ENCODE measurements at regions of chr10 and their contacts with region 1.

Region 1: DNA sequence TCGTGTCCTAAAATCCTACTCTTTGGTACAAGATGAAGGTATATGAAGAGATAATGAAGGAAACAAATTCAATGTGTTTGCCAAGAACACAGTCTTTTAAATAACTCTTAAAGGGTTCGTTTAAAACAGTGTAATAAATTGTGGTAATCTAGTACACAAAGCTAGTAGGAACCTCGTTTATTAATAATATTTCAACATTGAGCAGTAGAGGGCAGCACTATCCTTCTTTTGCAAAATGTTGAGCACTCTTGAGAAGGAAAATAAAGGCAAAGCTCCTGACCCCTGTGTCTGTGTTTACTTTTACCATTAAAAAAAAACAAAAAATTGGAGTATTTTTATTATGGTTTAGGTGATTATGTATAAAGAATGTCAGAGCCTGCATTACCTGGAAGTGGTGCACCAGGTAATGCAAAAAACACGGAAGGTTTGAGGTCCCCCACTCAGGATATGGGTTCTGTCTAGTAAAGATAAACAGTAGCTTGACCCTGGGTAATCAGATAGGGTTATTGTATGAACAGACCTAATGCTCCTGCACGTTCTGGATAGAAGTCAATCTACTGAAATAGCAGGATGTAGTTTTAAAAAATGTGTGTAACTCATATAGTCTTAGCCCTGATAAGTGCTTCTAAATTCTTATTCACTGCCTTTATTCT is 5.7 kb upstream of the GOT1 start:
- DNase-seq: no peak
- H3K4me3 ChIP-seq: peak overlapping the region in 24 of 59 donors; percentile 0 to 36 (median 10)
- H3K27ac ChIP-seq: peak overlapping the region in 27 of 59 donors; percentile 6 to 63 (median 29)
- H3K27me3 ChIP-seq: no peaks in the 10 kb centered on the region
- CTCF ChIP-seq: peak; percentile 50 to 82 (median 71)

Region 2: DNA sequence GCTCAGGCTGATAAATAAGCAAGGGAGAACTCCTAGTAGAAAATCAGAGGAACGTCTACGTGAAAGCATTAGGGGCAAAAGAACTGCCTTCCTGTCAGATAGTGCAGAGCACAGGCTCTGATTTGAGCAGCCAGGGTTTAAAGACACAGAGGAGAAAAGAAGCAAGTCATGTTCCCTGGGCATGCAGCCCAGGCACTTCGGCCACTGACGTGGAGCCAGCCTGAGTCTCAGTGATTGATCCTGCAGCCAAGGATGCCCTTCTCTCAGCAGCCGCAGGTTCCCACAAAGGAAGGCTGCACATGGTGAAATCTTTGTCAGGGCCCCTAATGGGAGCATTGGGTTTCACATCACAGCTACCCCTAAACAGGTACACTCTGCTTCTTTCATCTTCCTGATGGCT is 827.7 kb before region 1 on chr10:
- intact Hi-C with region 1: no loop called
- DNase-seq: peak in 1 of 10 donors; percentile 9
- H3K4me3 ChIP-seq: peak overlapping the region in 26 of 59 donors; percentile 1 to 37 (median 12)
- H3K27ac ChIP-seq: no peak overlapping the region
- H3K27me3 ChIP-seq: peaks cover 0 to 4% (median 0%) of the 10 kb centered on the region in 45 donors
- CTCF ChIP-seq: no peak

Region 3: DNA sequence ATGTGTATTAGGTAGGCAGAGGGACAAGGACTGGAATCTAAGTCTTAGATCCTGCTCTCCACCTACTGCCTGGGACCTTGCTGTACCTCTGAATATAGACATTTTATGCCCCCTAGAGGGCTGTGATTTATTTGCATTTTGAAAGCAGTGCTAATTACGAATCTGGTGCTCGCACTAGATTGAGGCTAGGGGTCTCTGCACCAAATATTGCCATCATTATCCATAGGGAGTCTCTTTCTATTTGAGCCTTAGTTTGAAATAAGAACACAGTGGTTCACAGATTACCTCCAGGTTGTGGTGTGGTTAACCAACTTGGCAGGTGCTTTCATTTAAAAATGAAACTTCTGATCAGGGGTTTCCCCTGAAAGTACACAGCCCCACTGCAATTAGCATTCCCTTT is 65.1 kb before region 1 on chr10:
- intact Hi-C with region 1: no loop called
- DNase-seq: no peak
- H3K4me3 ChIP-seq: peak overlapping the region in 3 of 59 donors; percentile 10 to 27 (median 12)
- H3K27ac ChIP-seq: no peak overlapping the region
- H3K27me3 ChIP-seq: no peaks in the 10 kb centered on the region
- CTCF ChIP-seq: peak in 49 of 56 donors; percentile 8 to 60 (median 38)

Region 4: DNA sequence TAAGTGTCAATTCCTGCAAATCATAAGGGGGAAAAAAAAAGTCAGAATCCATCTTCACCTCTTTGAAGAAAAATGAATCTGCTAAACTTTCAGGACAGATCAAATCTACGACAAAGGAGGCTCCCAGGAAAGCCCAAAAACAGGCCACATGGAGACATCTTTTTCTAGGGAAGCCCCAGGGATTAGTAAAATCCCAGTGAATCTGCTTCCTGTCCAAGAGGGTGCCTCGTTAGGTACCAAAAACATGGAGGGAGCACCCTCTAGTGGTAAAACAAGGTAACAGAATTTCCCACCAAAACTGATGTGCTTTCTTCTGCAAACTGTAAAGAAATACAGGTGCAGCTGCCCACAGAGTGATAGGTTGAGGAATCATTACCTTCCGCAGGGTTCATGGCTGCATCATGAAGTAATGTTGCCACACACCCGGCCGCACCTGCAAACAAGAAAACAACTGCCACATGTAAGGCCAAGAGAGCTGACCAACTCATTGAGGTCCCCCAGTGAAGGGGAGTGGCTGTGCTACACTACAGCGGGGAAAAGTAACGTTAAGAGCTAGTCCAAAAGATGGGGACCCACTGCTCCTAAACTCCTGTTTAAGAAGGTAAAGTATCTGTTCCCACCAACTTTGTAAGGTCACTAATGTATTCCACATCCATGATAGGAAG is 176.2 kb after region 1 on chr10:
- intact Hi-C with region 1: loop called in 1 of 2 experiments (anchors 2 kb)
- DNase-seq: peak in 2 of 10 donors; percentile 14 to 30
- H3K4me3 ChIP-seq: no peak overlapping the region
- H3K27ac ChIP-seq: peak overlapping the region in 3 of 59 donors; percentile 5 to 29 (median 25)
- H3K27me3 ChIP-seq: no peaks in the 10 kb centered on the region
- CTCF ChIP-seq: peak; percentile 75 to 92 (median 86)

Region 5: GRCh38 chr10:99711129-99711719 is 275.1 kb after region 1 on chr10:
- intact Hi-C with region 1: loop called in 1 of 2 experiments (anchors 5 kb)
- DNase-seq: no peak
- H3K4me3 ChIP-seq: no peak overlapping the region
- H3K27ac ChIP-seq: no peak overlapping the region
- H3K27me3 ChIP-seq: no peaks in the 10 kb centered on the region
- CTCF ChIP-seq: peak in 52 of 56 donors; percentile 17 to 71 (median 51)